A549 (cell line): ENCODE measurements at regions of chr11 and their contacts with region 1.

Region 1: GRCh38 chr11:36265793-36266628 is 23.2 kb downstream of the COMMD9 start:
- DNase-seq: peak; percentile 55 to 62
- ATAC-seq: peak; percentile 75 to 93
- H3K4me3 ChIP-seq: no peak overlapping the region
- H3K27ac ChIP-seq: no peak overlapping the region
- H3K4me1 ChIP-seq: no peaks in the 10 kb centered on the region
- CTCF ChIP-seq: peak; percentile 86
- EP300 ChIP-seq: no peak
- POLR2A ChIP-seq: no peak
- RAD21 ChIP-seq: peak; percentile 93

Region 2: GRCh38 chr11:35485656-35486322 is 780.2 kb before region 1 on chr11:
- CTCF ChIA-PET with region 1: interaction called, 35 read pairs
- POLR2A ChIA-PET with region 1: no interaction called
- DNase-seq: peak; percentile 65 to 77
- ATAC-seq: peak; percentile 96 to 99
- H3K4me3 ChIP-seq: no peak overlapping the region
- H3K27ac ChIP-seq: no peak overlapping the region
- H3K4me1 ChIP-seq: peaks cover under 1% of the 10 kb centered on the region; the same call in 1 of the 3 replicates
- CTCF ChIP-seq: peak; percentile 81
- EP300 ChIP-seq: no peak
- POLR2A ChIP-seq: no peak
- RAD21 ChIP-seq: peak; percentile 69 to 75

Region 3: GRCh38 chr11:35617687-35618496 is 648.1 kb before region 1 on chr11 and contains the start of gene FJX1:
- CTCF ChIA-PET with region 1: interaction called, 51 read pairs
- POLR2A ChIA-PET with region 1: no interaction called
- DNase-seq: peak; percentile 81 to 83
- ATAC-seq: peak; percentile 68 to 73
- H3K4me3 ChIP-seq: peak within 1 kb of the TSS; percentile 90
- H3K27ac ChIP-seq: peak within 1 kb of the TSS; percentile 94 to 97
- H3K4me1 ChIP-seq: peaks cover 46% of the 10 kb centered on the region; the same call in 2 of the 3 replicates
- CTCF ChIP-seq: no peak
- EP300 ChIP-seq: peak in 1 of 2 experiments; percentile 27; a peak in 1 of 5 replicates
- POLR2A ChIP-seq: peak; percentile 19; the same call in 1 of the 2 replicates
- RAD21 ChIP-seq: no peak; a peak in 1 of 5 replicates
- polyA plus RNA-seq, gene FJX1: 6.5 and 7.1 TPM in 2 replicates

Region 4: GRCh38 chr11:36131721-36132397 is 134.2 kb before region 1 on chr11:
- CTCF ChIA-PET with region 1: interaction called, 10 read pairs
- POLR2A ChIA-PET with region 1: no interaction called
- DNase-seq: peak in 1 of 2 experiments; percentile 41
- ATAC-seq: peak; percentile 70 to 86; a peak in 3 of 6 replicates
- H3K4me3 ChIP-seq: no peak overlapping the region
- H3K27ac ChIP-seq: no peak overlapping the region
- H3K4me1 ChIP-seq: peaks cover 4% of the 10 kb centered on the region; the same call in 1 of the 3 replicates
- CTCF ChIP-seq: peak; percentile 71
- EP300 ChIP-seq: no peak
- POLR2A ChIP-seq: no peak
- RAD21 ChIP-seq: peak; percentile 66 to 72

Region 5: DNA sequence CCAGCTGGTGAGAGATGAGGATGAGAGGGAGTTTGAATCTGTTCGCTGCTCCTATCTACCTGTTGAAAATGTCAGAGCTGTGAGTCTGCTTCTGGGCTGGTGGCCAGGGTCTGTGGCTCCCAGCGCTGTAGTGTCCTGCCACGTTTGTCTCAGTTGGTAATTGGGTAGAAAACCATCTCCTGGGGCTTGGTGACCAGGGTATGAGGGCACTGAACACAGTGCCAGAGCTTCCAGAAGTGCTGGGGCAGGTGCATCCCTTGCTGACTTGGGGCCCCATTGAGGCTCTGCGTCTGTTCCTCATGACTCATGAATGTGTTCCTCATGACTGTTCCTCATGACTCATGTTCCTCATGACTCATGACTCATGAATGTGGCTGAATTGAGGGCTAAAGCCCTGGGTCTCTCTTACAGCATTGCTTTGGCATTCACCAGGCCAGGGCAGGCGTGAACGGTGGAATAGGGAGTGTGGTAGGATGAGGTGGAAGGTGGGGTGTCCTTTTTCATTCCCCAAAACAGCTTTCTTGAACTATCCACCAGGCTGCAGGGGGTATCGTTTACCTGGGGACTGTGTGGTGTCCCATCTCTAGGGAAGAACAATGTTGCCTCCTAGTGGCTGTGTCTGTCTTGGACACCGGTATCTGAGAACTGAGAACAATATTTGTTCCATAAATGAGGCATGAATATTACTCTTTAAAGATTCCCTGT is 116.3 kb before region 1 on chr11:
- CTCF ChIA-PET with region 1: interaction called, 18 read pairs
- POLR2A ChIA-PET with region 1: no interaction called
- DNase-seq: peak; percentile 94 to 98
- ATAC-seq: peak; percentile 95 to 98
- H3K4me3 ChIP-seq: no peak overlapping the region
- H3K27ac ChIP-seq: peak overlapping the region; percentile 84 to 89
- H3K4me1 ChIP-seq: peaks cover 44% of the 10 kb centered on the region
- CTCF ChIP-seq: peak; percentile 74
- EP300 ChIP-seq: peak; percentile 41 to 55; a peak in 2 of 5 replicates
- POLR2A ChIP-seq: no peak
- RAD21 ChIP-seq: peak; percentile 74 to 81

Region 6: GRCh38 chr11:36278531-36279282 is 12.7 kb after region 1 on chr11:
- CTCF ChIA-PET with region 1: interaction called, 34 read pairs
- POLR2A ChIA-PET with region 1: no interaction called
- DNase-seq: no peak
- ATAC-seq: peak in 1 of 2 experiments; percentile 55; a peak in 3 of 6 replicates
- H3K4me3 ChIP-seq: no peak overlapping the region
- H3K27ac ChIP-seq: no peak overlapping the region
- H3K4me1 ChIP-seq: no peaks in the 10 kb centered on the region
- CTCF ChIP-seq: no peak
- EP300 ChIP-seq: no peak
- POLR2A ChIP-seq: no peak
- RAD21 ChIP-seq: no peak

Region 7: GRCh38 chr11:36333897-36334296 is 67.9 kb after region 1 on chr11:
- CTCF ChIA-PET with region 1: no interaction called
- POLR2A ChIA-PET with region 1: no interaction called
- DNase-seq: peak in 1 of 2 experiments; percentile 52
- ATAC-seq: peak in 1 of 2 experiments; percentile 84; a peak in 3 of 6 replicates
- H3K4me3 ChIP-seq: no peak overlapping the region
- H3K27ac ChIP-seq: no peak overlapping the region
- H3K4me1 ChIP-seq: no peaks in the 10 kb centered on the region
- CTCF ChIP-seq: no peak
- EP300 ChIP-seq: no peak
- POLR2A ChIP-seq: no peak
- RAD21 ChIP-seq: no peak